Naive thymus-derived CD4-positive, alpha-beta T cell (primary cell): ENCODE measurements at regions of chr4 and their contacts with region 1.

Region 1: GRCh38 chr4:139295206-139295941 is 5.9 kb upstream of the NAA15 start:
- DNase-seq: peak; percentile 90 to 99 (median 94)
- ATAC-seq: peak; percentile 99
- H3K4me3 ChIP-seq: peak overlapping the region; percentile 97
- H3K4me3 Mint-ChIP-seq: peak overlapping the region; percentile 86 to 100 (median 96)
- H3K27ac ChIP-seq: peak overlapping the region; percentile 94
- H3K27ac Mint-ChIP-seq: peak overlapping the region; percentile 93 to 100 (median 97)
- H3K4me1 ChIP-seq: peaks cover 13 to 28% of the 10 kb centered on the region in 2 donors
- H3K4me1 Mint-ChIP-seq: peaks cover 2 to 62% (median 40%) of the 10 kb centered on the region in 7 donors
- H3K27me3 ChIP-seq: no peaks in the 10 kb centered on the region
- H3K27me3 Mint-ChIP-seq: no peaks in the 10 kb centered on the region

Region 2: GRCh38 chr4:139083956-139084803 is 211.2 kb before region 1 on chr4:
- CTCF ChIA-PET with region 1: interaction called, 3 read pairs
- POLR2A ChIA-PET with region 1: interaction called, 36 read pairs
- intact Hi-C with region 1: loop called (anchors 1 kb)
- DNase-seq: peak; percentile 54 to 88 (median 84)
- ATAC-seq: peak; percentile 64
- H3K4me3 ChIP-seq: peak overlapping the region; percentile 99
- H3K4me3 Mint-ChIP-seq: peak overlapping the region; percentile 90 to 100 (median 92)
- H3K27ac ChIP-seq: peak overlapping the region; percentile 96
- H3K27ac Mint-ChIP-seq: peak overlapping the region; percentile 85 to 100 (median 96)
- H3K4me1 ChIP-seq: peaks cover 16 to 27% of the 10 kb centered on the region in 2 donors
- H3K4me1 Mint-ChIP-seq: peaks cover 16 to 49% (median 41%) of the 10 kb centered on the region in 7 donors
- H3K27me3 ChIP-seq: no peaks in the 10 kb centered on the region
- H3K27me3 Mint-ChIP-seq: no peaks in the 10 kb centered on the region

Region 3: GRCh38 chr4:139144161-139144859 is 151.1 kb before region 1 on chr4:
- CTCF ChIA-PET with region 1: no interaction called
- POLR2A ChIA-PET with region 1: no interaction called
- intact Hi-C with region 1: no loop called
- DNase-seq: no peak
- ATAC-seq: peak; percentile 59
- H3K4me3 ChIP-seq: no peak overlapping the region
- H3K4me3 Mint-ChIP-seq: no peak overlapping the region
- H3K27ac ChIP-seq: no peak overlapping the region
- H3K27ac Mint-ChIP-seq: peak overlapping the region in 1 of 9 donors; percentile 36
- H3K4me1 ChIP-seq: no peaks in the 10 kb centered on the region
- H3K4me1 Mint-ChIP-seq: peaks cover 16 to 38% (median 26%) of the 10 kb centered on the region in 7 donors
- H3K27me3 ChIP-seq: no peaks in the 10 kb centered on the region
- H3K27me3 Mint-ChIP-seq: no peaks in the 10 kb centered on the region

Region 4: GRCh38 chr4:139229534-139230039 is 65.8 kb before region 1 on chr4:
- CTCF ChIA-PET with region 1: interaction called, 5 read pairs
- POLR2A ChIA-PET with region 1: no interaction called
- intact Hi-C with region 1: loop called (anchors 1 kb)
- DNase-seq: peak in 7 of 9 donors; percentile 11 to 58 (median 37)
- ATAC-seq: peak; percentile 84
- H3K4me3 ChIP-seq: no peak overlapping the region
- H3K4me3 Mint-ChIP-seq: no peak overlapping the region
- H3K27ac ChIP-seq: no peak overlapping the region
- H3K27ac Mint-ChIP-seq: no peak overlapping the region
- H3K4me1 ChIP-seq: no peaks in the 10 kb centered on the region
- H3K4me1 Mint-ChIP-seq: peaks cover 0 to 7% (median 4%) of the 10 kb centered on the region in 7 donors
- H3K27me3 ChIP-seq: no peaks in the 10 kb centered on the region
- H3K27me3 Mint-ChIP-seq: no peaks in the 10 kb centered on the region

Region 5: GRCh38 chr4:139243448-139244365 is 51.7 kb before region 1 on chr4:
- CTCF ChIA-PET with region 1: no interaction called
- POLR2A ChIA-PET with region 1: no interaction called
- intact Hi-C with region 1: no loop called
- DNase-seq: no peak
- ATAC-seq: no peak
- H3K4me3 ChIP-seq: no peak overlapping the region
- H3K4me3 Mint-ChIP-seq: no peak overlapping the region
- H3K27ac ChIP-seq: no peak overlapping the region
- H3K27ac Mint-ChIP-seq: no peak overlapping the region
- H3K4me1 ChIP-seq: no peaks in the 10 kb centered on the region
- H3K4me1 Mint-ChIP-seq: no peaks in the 10 kb centered on the region
- H3K27me3 ChIP-seq: no peaks in the 10 kb centered on the region
- H3K27me3 Mint-ChIP-seq: peaks cover 0 to 3% (median 0%) of the 10 kb centered on the region in 5 donors

Region 6: GRCh38 chr4:139266583-139267257 is 28.7 kb before region 1 on chr4:
- CTCF ChIA-PET with region 1: interaction called, 6 read pairs
- POLR2A ChIA-PET with region 1: interaction called, 3 read pairs
- intact Hi-C with region 1: loop called (anchors 1 to 2 kb)
- DNase-seq: peak in 8 of 9 donors; percentile 14 to 72 (median 20)
- ATAC-seq: peak; percentile 96
- H3K4me3 ChIP-seq: peak overlapping the region; percentile 42
- H3K4me3 Mint-ChIP-seq: peak overlapping the region; percentile 58 to 93 (median 84)
- H3K27ac ChIP-seq: no peak overlapping the region
- H3K27ac Mint-ChIP-seq: peak overlapping the region in 8 of 9 donors; percentile 4 to 86 (median 50)
- H3K4me1 ChIP-seq: peaks cover 12 to 14% of the 10 kb centered on the region in 2 donors
- H3K4me1 Mint-ChIP-seq: peaks cover 9 to 20% (median 14%) of the 10 kb centered on the region in 7 donors
- H3K27me3 ChIP-seq: no peaks in the 10 kb centered on the region
- H3K27me3 Mint-ChIP-seq: peaks cover 0 to 18% (median 0%) of the 10 kb centered on the region in 5 donors

Region 7: GRCh38 chr4:139568206-139568955 is 273.0 kb after region 1 on chr4:
- CTCF ChIA-PET with region 1: no interaction called
- POLR2A ChIA-PET with region 1: no interaction called
- intact Hi-C with region 1: no loop called
- DNase-seq: no peak
- ATAC-seq: no peak
- H3K4me3 ChIP-seq: no peak overlapping the region
- H3K4me3 Mint-ChIP-seq: no peak overlapping the region
- H3K27ac ChIP-seq: no peak overlapping the region
- H3K27ac Mint-ChIP-seq: no peak overlapping the region
- H3K4me1 ChIP-seq: no peaks in the 10 kb centered on the region
- H3K4me1 Mint-ChIP-seq: peaks cover 0 to 4% (median 0%) of the 10 kb centered on the region in 7 donors
- H3K27me3 ChIP-seq: no peaks in the 10 kb centered on the region
- H3K27me3 Mint-ChIP-seq: peaks cover 0 to 4% (median 0%) of the 10 kb centered on the region in 5 donors